ENCODE measurements at regions of chr12 and their contacts with region 1.

Region 1: GRCh38 chr12:95582230-95583058 is 31.2 kb upstream of the USP44 start:
- DNase-seq: peak; percentile 86
- H3K4me3 ChIP-seq: no peak overlapping the region
- H3K27ac ChIP-seq: no peak overlapping the region
- H3K4me1 ChIP-seq: no peaks in the 10 kb centered on the region
- H3K27me3 ChIP-seq: no peaks in the 10 kb centered on the region
- CTCF ChIP-seq: peak; percentile 40 to 48
- POLR2A ChIP-seq: no peak

Region 2: DNA sequence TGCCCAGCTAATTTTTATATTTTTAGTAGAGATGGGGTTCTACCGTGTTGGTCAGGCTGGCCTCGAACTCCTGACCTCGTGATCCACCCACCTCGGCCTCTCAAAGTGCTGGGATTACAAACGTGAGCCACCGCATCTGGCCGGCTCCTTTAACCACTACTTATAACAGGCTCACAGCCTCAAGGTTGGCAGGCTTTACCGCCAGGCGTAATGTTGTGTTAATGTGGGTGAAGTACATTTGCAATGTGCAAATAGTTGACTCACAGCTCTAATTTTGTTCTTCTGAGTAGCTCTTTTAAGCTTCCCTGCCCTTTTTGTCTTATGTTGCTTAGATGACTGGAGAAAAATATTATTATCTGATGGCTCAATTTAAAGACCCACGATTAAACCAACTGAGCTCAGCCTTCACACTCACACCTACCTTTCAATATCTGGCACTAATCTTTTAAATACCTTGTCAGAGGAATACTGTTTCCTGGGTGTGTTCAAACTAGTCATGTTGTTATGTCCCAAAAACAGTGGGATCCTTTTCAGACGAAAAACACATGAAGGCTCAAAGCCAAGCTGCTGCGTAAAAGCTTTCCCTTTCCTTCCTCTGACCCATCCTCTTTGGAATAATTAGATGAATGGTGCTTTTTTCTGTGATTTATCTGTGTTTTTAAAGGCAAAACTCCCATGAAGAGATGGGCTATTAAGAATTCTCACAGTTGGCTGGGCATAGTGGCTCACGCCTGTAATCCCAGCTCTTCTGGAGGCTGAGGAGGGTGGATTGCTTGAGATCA is 26.0 kb after region 1 on chr12:
- CTCF ChIA-PET with region 1: interaction called, 12 read pairs
- POLR2A ChIA-PET with region 1: no interaction called
- dilution Hi-C with region 1: no loop called
- intact Hi-C with region 1: no loop called
- DNase-seq: peak; percentile 91
- H3K4me3 ChIP-seq: no peak overlapping the region
- H3K27ac ChIP-seq: peak overlapping the region; percentile 91
- H3K4me1 ChIP-seq: peaks cover 74% of the 10 kb centered on the region
- H3K27me3 ChIP-seq: no peaks in the 10 kb centered on the region
- CTCF ChIP-seq: no peak
- POLR2A ChIP-seq: no peak

Region 3: DNA sequence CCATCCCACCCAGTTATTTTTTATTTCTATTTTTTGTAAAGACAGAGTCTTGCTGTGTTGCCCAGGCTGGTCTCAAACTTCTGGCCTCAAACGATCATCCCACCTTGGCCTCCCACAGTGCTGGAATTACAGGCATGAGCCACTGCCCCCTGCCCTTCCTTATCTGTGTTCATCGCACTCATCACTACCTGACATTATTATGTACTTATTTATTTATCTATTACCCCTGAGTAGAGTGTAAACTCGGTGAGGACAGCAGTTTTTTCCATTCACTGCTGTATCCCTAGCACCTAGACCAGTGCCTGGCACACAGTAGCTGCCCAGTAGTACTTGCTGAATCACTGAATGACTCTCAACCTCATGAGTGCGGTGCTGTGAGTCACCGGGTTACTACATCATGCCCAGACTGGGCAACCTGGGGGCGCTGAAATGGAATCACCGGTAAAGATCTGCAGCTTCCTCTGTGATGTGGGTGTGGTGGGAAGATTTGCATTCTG is 50.7 kb after region 1 on chr12:
- CTCF ChIA-PET with region 1: interaction called, 10 read pairs
- POLR2A ChIA-PET with region 1: no interaction called
- dilution Hi-C with region 1: no loop called
- intact Hi-C with region 1: loop called (anchors 1 kb)
- DNase-seq: peak; percentile 90
- H3K4me3 ChIP-seq: no peak overlapping the region
- H3K27ac ChIP-seq: peak overlapping the region; percentile 99
- H3K4me1 ChIP-seq: peaks cover 54% of the 10 kb centered on the region
- H3K27me3 ChIP-seq: no peaks in the 10 kb centered on the region
- CTCF ChIP-seq: no peak
- POLR2A ChIP-seq: no peak

Region 4: GRCh38 chr12:95805864-95806671 is 223.6 kb after region 1 on chr12:
- CTCF ChIA-PET with region 1: interaction called, 39 read pairs
- POLR2A ChIA-PET with region 1: interaction called, 3 read pairs
- dilution Hi-C with region 1: no loop called
- intact Hi-C with region 1: no loop called
- DNase-seq: peak; percentile 85
- H3K4me3 ChIP-seq: no peak overlapping the region
- H3K27ac ChIP-seq: peak overlapping the region; percentile 74
- H3K4me1 ChIP-seq: peaks cover 40% of the 10 kb centered on the region
- H3K27me3 ChIP-seq: no peaks in the 10 kb centered on the region
- CTCF ChIP-seq: no peak
- POLR2A ChIP-seq: no peak

Region 5: DNA sequence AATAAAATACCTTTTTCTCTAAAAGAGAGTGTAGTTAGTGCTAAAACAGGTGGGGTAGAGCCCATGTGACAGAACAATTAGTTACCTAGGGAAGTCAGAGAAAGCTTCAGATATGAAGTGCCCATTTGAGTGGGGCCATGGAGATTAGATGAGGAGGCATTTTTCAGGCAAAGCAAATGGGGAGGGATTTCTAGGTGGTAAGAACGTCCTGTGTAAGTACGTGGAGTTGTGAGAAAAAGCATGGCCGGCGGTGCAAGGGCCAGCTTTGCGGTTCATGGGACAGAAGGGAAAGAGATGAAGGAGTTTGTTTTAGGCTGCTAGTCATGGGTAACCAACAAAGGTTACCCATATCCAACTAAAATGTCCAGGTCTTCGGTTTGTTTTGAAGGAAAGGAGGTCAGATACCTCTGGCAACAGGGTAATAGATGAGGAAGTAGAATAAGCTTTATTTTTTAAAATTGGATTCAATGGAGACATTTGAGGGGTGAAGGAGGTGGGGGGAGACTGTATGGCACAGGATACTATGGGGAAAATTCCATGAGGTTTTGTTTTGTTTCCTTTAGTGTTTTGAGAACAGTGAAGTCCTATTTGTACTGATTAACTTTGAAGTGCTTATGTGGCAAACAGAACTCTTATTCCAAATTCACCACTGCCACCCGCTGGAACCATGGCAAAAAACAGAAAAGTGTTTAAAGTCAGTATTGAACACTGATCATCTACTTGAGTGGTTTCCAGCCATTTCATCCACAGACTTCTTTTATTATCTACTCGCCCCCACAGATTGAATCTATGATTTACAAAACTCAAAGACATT is 266.3 kb after region 1 on chr12:
- CTCF ChIA-PET with region 1: interaction called, 33 read pairs
- POLR2A ChIA-PET with region 1: no interaction called
- dilution Hi-C with region 1: no loop called
- intact Hi-C with region 1: no loop called
- DNase-seq: peak; percentile 80
- H3K4me3 ChIP-seq: no peak overlapping the region
- H3K27ac ChIP-seq: no peak overlapping the region
- H3K4me1 ChIP-seq: no peaks in the 10 kb centered on the region
- H3K27me3 ChIP-seq: peaks cover 0 to 12% of the 10 kb centered on the region in 2 experiments
- CTCF ChIP-seq: peak; percentile 30 to 31
- POLR2A ChIP-seq: no peak